Caco-2 (cell line): ENCODE measurements at regions of chr11 and their contacts with region 1.

Region 1: GRCh38 chr11:31558001-31558400 is 48.4 kb downstream of the ELP4 start:
- DNase-seq: no peak
- H3K4me3 ChIP-seq: no peak overlapping the region
- H3K4me3 Mint-ChIP-seq: no peak overlapping the region
- H3K27ac Mint-ChIP-seq: no peak overlapping the region
- H3K4me1 ChIP-seq: no peaks in the 10 kb centered on the region
- H3K4me1 Mint-ChIP-seq: no peaks in the 10 kb centered on the region
- H3K27me3 ChIP-seq: no peaks in the 10 kb centered on the region
- H3K27me3 Mint-ChIP-seq: no peaks in the 10 kb centered on the region
- CTCF ChIP-seq: no peak

Region 2: DNA sequence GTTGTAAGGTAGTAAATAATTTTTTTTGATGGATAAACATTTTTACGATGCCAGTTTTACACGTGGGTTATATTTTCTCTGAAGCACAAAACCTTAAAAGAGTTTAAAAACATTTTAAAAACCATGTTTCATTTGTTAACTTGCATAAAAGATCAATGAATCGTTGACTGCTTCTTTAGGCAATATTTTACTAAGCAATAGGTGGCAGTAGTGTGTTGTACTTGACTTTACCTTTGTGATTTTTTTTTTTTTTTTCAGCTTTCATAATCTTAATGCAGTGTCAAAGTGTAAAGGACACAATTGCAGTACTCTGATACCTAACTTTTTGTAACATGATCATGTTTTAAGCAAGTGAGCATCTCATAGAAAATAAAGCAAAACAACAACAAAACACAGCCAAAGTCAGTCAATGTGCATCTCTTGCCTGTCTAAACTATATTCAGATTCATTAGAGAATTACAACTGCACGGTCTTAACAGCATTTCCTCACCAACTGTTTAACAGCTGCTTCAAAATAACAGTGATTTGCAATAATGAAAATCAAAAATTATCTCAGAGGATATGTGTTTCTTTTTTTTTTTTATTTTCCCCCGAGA is 160.7 kb before region 1 on chr11:
- CTCF ChIA-PET with region 1: no interaction called
- POLR2A ChIA-PET with region 1: no interaction called
- intact Hi-C with region 1: no loop called
- DNase-seq: peak in 1 of 2 experiments; percentile 17
- H3K4me3 ChIP-seq: no peak overlapping the region
- H3K4me3 Mint-ChIP-seq: no peak overlapping the region
- H3K27ac Mint-ChIP-seq: no peak overlapping the region
- H3K4me1 ChIP-seq: no peaks in the 10 kb centered on the region
- H3K4me1 Mint-ChIP-seq: no peaks in the 10 kb centered on the region
- H3K27me3 ChIP-seq: no peaks in the 10 kb centered on the region
- H3K27me3 Mint-ChIP-seq: no peaks in the 10 kb centered on the region
- CTCF ChIP-seq: peak; percentile 51

Region 3: GRCh38 chr11:31582697-31583096 is 24.7 kb after region 1 on chr11:
- CTCF ChIA-PET with region 1: no interaction called
- POLR2A ChIA-PET with region 1: interaction called, 12 read pairs
- intact Hi-C with region 1: no loop called
- DNase-seq: no peak
- H3K4me3 ChIP-seq: no peak overlapping the region
- H3K4me3 Mint-ChIP-seq: no peak overlapping the region
- H3K27ac Mint-ChIP-seq: no peak overlapping the region
- H3K4me1 ChIP-seq: no peaks in the 10 kb centered on the region
- H3K4me1 Mint-ChIP-seq: no peaks in the 10 kb centered on the region
- H3K27me3 ChIP-seq: no peaks in the 10 kb centered on the region
- H3K27me3 Mint-ChIP-seq: no peaks in the 10 kb centered on the region
- CTCF ChIP-seq: no peak